Heart right ventricle (tissue), 16 donors: ENCODE measurements at regions of chr19 and their contacts with region 1.

Region 1: GRCh38 chr19:58228585-58229254 is at the start of gene ZNF544:
- DNase-seq: peak; percentile 75 to 80
- ATAC-seq: peak; percentile 95 to 99 (median 97)
- H3K4me3 ChIP-seq: peak within 1 kb of the TSS; percentile 60 to 94 (median 82)
- H3K27ac ChIP-seq: peak within 1 kb of the TSS; percentile 42 to 95 (median 88)
- H3K4me1 ChIP-seq: peaks cover 5 to 23% (median 17%) of the 10 kb centered on the region in 9 donors
- H3K27me3 ChIP-seq: no peaks in the 10 kb centered on the region
- CTCF ChIP-seq: peak in 1 of 9 donors; percentile 25
- total RNA-seq, gene ZNF544: 19.2 to 35.0 (median 23.7) TPM

Region 2: GRCh38 chr19:58154679-58155648 is 73.8 kb before region 1 on chr19:
- intact Hi-C with region 1: no loop called
- DNase-seq: peak; percentile 96 to 99
- ATAC-seq: peak; percentile 96 to 98 (median 98)
- H3K4me3 ChIP-seq: peak overlapping the region; percentile 57 to 100 (median 83)
- H3K27ac ChIP-seq: peak overlapping the region; percentile 49 to 99 (median 91)
- H3K4me1 ChIP-seq: peaks cover 0 to 42% (median 28%) of the 10 kb centered on the region in 9 donors
- H3K27me3 ChIP-seq: no peaks in the 10 kb centered on the region
- CTCF ChIP-seq: peak; percentile 91 to 99 (median 97)

Region 3: GRCh38 chr19:58243351-58243750 is 14.6 kb after region 1 on chr19:
- intact Hi-C with region 1: loop called in 1 of 10 experiments (anchors 1 kb)
- DNase-seq: no peak
- ATAC-seq: no peak
- H3K4me3 ChIP-seq: no peak overlapping the region
- H3K27ac ChIP-seq: no peak overlapping the region
- H3K4me1 ChIP-seq: no peaks in the 10 kb centered on the region
- H3K27me3 ChIP-seq: no peaks in the 10 kb centered on the region
- CTCF ChIP-seq: no peak

Region 4: GRCh38 chr19:58278157-58279041 is 49.7 kb after region 1 on chr19 and contains the start of gene ZNF8:
- intact Hi-C with region 1: loop called in 2 of 10 experiments (anchors 5 kb)
- DNase-seq: peak; percentile 98
- ATAC-seq: peak; percentile 95 to 98 (median 96)
- H3K4me3 ChIP-seq: peak within 1 kb of the TSS; percentile 58 to 98 (median 88)
- H3K27ac ChIP-seq: peak within 1 kb of the TSS; percentile 74 to 98 (median 96)
- H3K4me1 ChIP-seq: peaks cover 4 to 29% (median 20%) of the 10 kb centered on the region in 9 donors
- H3K27me3 ChIP-seq: no peaks in the 10 kb centered on the region
- CTCF ChIP-seq: peak in 4 of 9 donors; percentile 19 to 38 (median 32)
- total RNA-seq, gene ZNF8: 4.4 to 6.2 (median 5.6) TPM